Common myeloid progenitor, CD34-positive (primary cell): ENCODE measurements at regions of chr3 and their contacts with region 1.

Region 1: DNA sequence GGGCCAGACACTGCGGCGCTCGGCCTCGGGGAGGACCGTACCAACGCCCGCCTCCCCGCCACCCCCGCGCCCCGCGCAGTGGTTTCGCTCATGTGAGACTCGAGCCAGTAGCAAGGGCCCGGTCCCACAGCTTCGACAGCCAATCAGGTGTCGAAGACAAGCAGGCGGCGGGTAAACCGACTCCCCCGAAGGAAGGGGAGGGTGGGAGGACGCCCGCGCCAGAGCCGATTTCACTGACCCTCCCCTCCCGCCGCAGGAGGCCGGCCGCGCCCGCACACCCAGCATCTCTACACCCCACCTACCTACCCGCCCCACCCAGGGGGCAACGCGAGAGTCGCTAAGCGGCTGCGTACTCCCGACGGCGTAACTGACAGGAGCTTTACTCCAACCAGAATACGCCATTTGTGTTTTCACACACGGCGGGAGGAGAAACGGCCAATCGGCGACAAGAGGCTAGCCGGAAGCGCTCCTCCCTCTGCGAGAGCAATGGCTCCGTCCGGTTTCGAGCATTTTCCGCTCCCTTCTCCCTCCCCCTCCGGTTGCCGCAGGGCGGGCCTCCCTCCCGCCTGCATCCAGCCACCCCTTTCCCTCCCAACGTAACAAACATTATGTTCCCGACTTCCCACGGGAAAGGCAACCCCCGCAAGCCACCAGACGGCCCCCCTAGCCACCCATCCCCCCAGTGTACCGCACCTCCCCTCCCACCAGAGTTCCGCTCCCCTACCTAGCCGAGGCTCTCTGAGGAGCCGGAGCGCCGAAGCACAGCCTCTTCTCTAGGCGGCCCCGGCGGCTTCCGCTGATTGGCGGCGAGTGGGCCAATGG is 504 bp upstream of the SETD5 start:
- DNase-seq: peak; percentile 100
- H3K4me3 ChIP-seq: peak overlapping the region; percentile 47 to 96 (median 85)
- H3K27ac ChIP-seq: peak overlapping the region; percentile 89 to 95
- H3K4me1 ChIP-seq: peaks cover 28 to 72% (median 51%) of the 10 kb centered on the region in 4 experiments
- H3K27me3 ChIP-seq: no peaks in the 10 kb centered on the region

Region 2: GRCh38 chr3:9352917-9353752 is 43.8 kb before region 1 on chr3:
- CTCF ChIA-PET with region 1: interaction called, 15 read pairs
- POLR2A ChIA-PET with region 1: interaction called, 11 read pairs
- DNase-seq: peak; percentile 74 to 80 (median 77)
- H3K4me3 ChIP-seq: peak overlapping the region in 2 of 7 experiments; percentile 5 to 19
- H3K27ac ChIP-seq: peak overlapping the region in 1 of 2 experiments; percentile 37
- H3K4me1 ChIP-seq: peaks cover 5 to 27% (median 24%) of the 10 kb centered on the region in 4 experiments
- H3K27me3 ChIP-seq: no peaks in the 10 kb centered on the region

Region 3: DNA sequence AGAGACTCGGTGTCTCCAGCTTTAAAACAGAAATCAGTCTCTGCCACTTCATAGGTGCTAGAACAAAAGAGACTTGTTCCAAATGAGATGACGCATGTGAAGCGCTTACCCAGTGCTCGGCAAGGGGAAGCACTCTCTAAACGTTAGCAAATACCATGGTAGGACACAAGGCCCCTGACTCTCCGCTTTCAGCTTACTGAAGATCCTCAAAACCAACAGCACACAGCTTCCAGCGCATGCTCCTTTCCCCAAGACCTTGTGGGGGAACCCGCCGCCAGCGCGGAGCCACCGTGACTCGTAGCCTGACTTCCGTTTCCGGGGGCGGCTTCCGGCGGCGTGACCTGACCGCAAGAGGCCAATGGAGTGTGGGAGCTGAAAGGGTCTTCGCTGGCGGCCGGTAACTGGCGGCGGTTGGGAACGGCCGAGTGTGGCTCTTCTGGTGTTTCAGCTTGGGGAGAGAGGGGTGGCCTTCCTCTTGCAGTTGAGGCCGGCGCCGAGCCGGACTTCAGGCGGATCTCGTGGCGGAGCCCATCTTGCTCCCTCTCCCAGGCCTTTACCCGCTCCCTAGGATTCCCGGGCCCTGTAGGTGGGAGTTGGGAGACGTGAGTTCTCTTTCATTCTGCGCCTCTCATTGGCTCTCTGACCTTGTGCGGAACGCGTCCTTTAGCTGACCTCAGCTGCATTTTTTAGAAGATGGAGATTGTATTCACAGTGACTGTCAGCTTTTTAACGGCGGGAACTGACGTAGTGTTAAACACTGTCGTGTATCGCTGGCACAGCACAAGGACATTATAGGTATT is 34.0 kb before region 1 on chr3 and contains the start of gene THUMPD3:
- CTCF ChIA-PET with region 1: interaction called, 24 read pairs
- POLR2A ChIA-PET with region 1: interaction called, 70 read pairs
- DNase-seq: peak; percentile 96 to 99 (median 98)
- H3K4me3 ChIP-seq: peak within 1 kb of the TSS; percentile 62 to 88 (median 81)
- H3K27ac ChIP-seq: peak within 1 kb of the TSS; percentile 95 to 98
- H3K4me1 ChIP-seq: peaks cover 9 to 14% (median 11%) of the 10 kb centered on the region in 4 experiments
- H3K27me3 ChIP-seq: no peaks in the 10 kb centered on the region

Region 4: DNA sequence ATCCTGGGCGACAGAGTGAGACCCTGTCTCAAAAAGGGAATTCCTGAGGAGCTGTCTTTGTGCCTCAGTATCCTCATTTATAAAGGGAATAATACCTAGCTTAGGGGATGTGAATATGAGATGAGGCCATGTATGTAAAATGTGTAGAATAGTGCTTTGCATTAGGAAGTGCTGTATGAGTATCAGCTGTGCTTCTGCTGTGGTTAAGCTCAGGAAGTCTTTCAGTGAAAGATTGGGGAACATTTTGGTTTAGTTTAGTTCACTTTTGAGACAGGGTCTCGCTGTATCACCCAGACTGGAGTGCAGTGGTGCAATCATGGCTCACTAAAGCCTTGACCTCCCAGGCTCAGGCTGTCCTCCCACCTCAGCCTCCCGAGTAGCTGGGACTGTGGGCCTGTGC is 23.4 kb before region 1 on chr3:
- CTCF ChIA-PET with region 1: interaction called, 10 read pairs
- POLR2A ChIA-PET with region 1: interaction called, 3 read pairs
- DNase-seq: peak; percentile 48 to 87 (median 70)
- H3K4me3 ChIP-seq: no peak overlapping the region
- H3K27ac ChIP-seq: no peak overlapping the region
- H3K4me1 ChIP-seq: peaks cover 0 to 14% (median 9%) of the 10 kb centered on the region in 4 experiments
- H3K27me3 ChIP-seq: no peaks in the 10 kb centered on the region

Region 5: DNA sequence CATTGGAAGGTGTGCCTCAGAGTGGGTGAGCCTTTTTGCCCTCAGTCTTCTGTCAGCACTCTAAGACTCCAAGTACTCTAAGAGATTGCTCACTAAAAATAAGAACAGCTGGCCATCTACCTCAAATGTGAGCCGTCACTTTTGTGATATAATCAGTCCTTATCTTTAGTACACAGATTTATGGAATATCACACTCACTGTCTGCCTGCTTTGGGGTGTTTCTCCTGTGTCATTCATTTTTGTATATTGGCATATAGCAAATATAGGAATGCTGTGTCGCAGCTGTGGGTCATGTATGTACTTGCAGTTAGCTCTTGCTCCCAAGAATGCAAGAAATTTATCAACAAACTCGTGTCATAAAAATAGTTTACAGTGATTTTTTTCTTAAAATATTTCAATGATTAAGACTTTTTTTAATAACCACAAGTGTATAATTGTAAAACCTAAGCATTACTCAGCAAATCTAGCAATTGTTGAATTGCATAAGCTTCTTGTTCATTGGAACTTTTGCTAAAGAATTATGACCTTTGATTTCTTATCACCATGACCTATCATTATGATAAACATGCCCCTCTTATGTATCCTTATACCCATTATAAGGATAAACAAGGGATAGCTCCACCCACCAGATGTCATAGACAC is 19.3 kb after region 1 on chr3:
- CTCF ChIA-PET with region 1: interaction called, 21 read pairs
- POLR2A ChIA-PET with region 1: interaction called, 27 read pairs
- DNase-seq: peak in 2 of 3 donors; percentile 36 to 54
- H3K4me3 ChIP-seq: no peak overlapping the region
- H3K27ac ChIP-seq: no peak overlapping the region
- H3K4me1 ChIP-seq: peaks cover 3 to 14% (median 4%) of the 10 kb centered on the region in 4 experiments
- H3K27me3 ChIP-seq: no peaks in the 10 kb centered on the region

Region 6: DNA sequence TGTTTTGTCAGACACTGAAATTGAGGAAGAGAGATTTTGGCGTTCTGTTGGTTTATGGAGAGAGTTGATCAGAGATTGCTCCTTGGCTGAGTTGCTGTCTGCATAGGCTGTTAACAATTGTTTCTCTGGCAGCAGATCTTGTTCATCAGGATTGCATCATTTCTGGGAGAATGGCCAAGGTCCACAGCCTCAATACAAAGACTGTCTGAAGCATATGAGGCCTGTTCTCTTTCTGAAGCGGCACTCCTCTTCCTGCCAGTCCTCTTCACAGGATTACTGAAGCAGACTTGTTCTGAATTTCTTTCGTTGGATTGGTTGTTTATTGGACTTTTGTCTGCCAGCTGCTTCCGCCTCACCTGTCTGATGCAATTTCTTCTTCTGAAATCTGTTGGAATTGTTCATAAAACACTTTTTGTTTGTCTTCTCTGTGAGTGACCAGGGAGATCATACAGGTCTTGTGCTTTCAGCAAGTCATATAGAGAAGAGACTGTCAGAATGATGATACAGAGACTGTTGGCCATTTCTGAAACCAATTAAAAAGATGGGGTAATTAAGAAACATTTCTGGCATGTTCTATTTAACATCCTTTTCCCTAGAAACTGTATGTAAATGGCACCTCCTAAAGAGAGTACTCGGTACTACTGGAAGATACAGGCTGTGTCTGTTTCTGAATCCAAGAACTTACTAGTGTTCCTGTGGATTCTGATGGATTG is 26.0 kb after region 1 on chr3:
- CTCF ChIA-PET with region 1: interaction called, 21 read pairs
- POLR2A ChIA-PET with region 1: interaction called, 27 read pairs
- DNase-seq: peak; percentile 61 to 71 (median 66)
- H3K4me3 ChIP-seq: peak overlapping the region in 1 of 7 experiments; percentile 30
- H3K27ac ChIP-seq: peak overlapping the region; percentile 26 to 80
- H3K4me1 ChIP-seq: peaks cover 2 to 22% (median 11%) of the 10 kb centered on the region in 4 experiments
- H3K27me3 ChIP-seq: no peaks in the 10 kb centered on the region

Region 7: DNA sequence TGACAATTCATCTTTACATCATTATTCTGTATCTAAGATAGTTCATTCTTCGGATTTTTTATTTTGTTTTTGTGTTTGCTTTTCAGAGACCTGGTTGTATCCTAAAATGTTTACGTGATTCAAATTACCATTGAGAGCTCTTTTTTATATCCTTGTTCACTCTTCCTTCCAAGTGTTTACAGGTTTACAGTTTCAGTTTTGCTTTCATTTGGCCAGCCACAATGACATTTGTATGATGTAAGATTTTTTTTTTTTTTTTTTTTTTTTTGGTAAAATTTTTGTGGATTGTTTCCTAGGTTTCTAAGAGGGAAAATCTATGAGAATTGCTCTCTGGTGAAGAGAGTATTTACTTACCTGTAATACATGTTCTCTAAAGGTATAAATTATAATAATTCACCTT is 55.5 kb after region 1 on chr3:
- CTCF ChIA-PET with region 1: no interaction called
- POLR2A ChIA-PET with region 1: no interaction called
- DNase-seq: peak; percentile 14 to 63 (median 58)
- H3K4me3 ChIP-seq: no peak overlapping the region
- H3K27ac ChIP-seq: peak overlapping the region in 1 of 2 experiments; percentile 21
- H3K4me1 ChIP-seq: no peaks in the 10 kb centered on the region
- H3K27me3 ChIP-seq: no peaks in the 10 kb centered on the region